Activated T-helper 1 cell treated with anti-CD3 and anti-CD28 coated beads, Interleukin-12 subunit alpha, Interleukin-12 subunit beta, Interleukin-2, Interleukin-4 antibody, amounts not matched to agents 30 ng/mL and 10 ng/mL and 1 ng/mL, durations not matched to agents 14 hours and 24 hours and 36 hours (primary cell): ENCODE measurements at regions of chr22 and their contacts with region 1.

Region 1: DNA sequence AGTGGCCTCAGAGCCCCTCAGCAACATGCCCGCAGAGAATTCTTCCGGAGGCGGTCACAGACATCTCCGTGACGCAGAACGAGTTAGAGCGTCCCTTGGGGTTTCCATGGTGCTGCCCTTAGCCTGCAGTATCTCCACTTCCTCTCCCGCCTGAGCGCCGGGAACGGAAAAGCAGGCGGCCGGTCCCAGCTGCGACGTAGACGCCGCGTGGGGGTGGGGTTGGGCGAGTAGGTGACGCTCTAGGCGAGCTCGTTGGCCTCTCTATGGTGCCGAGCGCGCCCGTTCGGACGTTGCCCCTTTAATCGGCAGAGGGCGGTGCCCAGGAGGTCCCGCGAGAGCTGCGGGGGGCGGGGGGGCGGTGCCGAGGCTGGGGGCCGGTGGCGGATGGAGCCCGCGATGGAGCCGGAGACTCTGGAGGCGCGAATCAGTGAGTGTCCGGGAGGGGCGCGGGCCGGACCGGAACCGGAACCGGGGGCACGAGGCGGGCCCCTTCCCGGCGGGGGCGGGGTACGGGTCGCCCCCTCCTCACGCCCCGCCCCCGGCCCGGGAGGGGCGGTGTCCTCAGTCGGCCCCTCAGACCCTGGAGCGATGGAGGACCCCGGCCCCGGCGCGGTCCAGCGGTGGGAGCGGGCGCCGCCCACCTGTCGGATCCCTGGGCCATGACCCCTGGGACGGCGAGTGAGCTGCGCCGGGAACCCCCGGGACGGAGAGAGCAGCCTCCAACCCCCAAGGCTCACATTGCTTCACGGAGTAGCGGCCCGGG is at the start of gene GGA1:
- DNase-seq: peak; percentile 96
- H3K4me3 Mint-ChIP-seq: peak within 1 kb of the TSS; percentile 96
- H3K27ac Mint-ChIP-seq: peak within 1 kb of the TSS; percentile 98
- H3K4me1 Mint-ChIP-seq: peaks cover 45% of the 10 kb centered on the region
- H3K27me3 Mint-ChIP-seq: peaks cover 1% of the 10 kb centered on the region
- total RNA-seq, gene GGA1: 70.8 and 78.9 TPM in 2 replicates

Region 2: GRCh38 chr22:37486224-37486845 is 122.3 kb before region 1 on chr22 and contains the start of gene MFNG:
- intact Hi-C with region 1: loop called (anchors 1 kb)
- DNase-seq: peak; percentile 69
- H3K4me3 Mint-ChIP-seq: peak within 1 kb of the TSS; percentile 92
- H3K27ac Mint-ChIP-seq: peak within 1 kb of the TSS; percentile 93
- H3K4me1 Mint-ChIP-seq: peaks cover 44% of the 10 kb centered on the region
- H3K27me3 Mint-ChIP-seq: no peaks in the 10 kb centered on the region
- total RNA-seq, gene MFNG: 213 and 214 TPM in 2 replicates

Region 3: DNA sequence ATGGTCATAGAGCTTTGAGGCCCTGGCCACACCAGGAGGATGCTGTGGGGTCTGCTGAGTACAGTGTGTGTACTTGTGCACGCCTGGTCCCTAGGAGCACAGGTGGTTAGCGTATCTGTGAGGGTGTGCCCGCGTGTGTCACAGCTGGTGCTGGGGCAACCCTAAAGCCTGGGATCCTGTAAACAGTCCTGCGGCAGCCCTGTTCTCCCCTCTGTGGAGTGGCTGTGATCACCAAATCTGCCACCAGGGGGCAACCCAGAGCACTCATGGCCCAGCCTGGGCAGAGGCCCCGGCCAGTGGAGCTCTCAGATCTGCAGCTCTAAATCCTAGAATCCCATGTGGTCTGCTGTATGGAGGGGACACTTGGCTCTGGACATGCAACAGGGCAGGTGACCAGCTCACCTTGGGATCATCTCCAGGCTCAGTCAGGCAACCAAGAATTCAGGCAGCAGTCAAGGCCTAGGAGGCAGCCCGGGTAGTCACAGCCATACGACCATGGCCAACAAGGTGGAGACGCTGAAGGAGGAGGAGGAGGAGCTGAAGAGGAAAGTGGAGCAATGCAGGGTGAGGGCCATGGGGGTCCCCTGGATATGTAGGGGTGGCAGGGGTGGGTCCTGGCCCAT is 34.7 kb after region 1 on chr22:
- intact Hi-C with region 1: loop called (anchors 1 kb)
- DNase-seq: peak; percentile 74
- H3K4me3 Mint-ChIP-seq: peak overlapping the region; percentile 59
- H3K27ac Mint-ChIP-seq: peak overlapping the region; percentile 52
- H3K4me1 Mint-ChIP-seq: peaks cover 26% of the 10 kb centered on the region
- H3K27me3 Mint-ChIP-seq: no peaks in the 10 kb centered on the region

Region 4: DNA sequence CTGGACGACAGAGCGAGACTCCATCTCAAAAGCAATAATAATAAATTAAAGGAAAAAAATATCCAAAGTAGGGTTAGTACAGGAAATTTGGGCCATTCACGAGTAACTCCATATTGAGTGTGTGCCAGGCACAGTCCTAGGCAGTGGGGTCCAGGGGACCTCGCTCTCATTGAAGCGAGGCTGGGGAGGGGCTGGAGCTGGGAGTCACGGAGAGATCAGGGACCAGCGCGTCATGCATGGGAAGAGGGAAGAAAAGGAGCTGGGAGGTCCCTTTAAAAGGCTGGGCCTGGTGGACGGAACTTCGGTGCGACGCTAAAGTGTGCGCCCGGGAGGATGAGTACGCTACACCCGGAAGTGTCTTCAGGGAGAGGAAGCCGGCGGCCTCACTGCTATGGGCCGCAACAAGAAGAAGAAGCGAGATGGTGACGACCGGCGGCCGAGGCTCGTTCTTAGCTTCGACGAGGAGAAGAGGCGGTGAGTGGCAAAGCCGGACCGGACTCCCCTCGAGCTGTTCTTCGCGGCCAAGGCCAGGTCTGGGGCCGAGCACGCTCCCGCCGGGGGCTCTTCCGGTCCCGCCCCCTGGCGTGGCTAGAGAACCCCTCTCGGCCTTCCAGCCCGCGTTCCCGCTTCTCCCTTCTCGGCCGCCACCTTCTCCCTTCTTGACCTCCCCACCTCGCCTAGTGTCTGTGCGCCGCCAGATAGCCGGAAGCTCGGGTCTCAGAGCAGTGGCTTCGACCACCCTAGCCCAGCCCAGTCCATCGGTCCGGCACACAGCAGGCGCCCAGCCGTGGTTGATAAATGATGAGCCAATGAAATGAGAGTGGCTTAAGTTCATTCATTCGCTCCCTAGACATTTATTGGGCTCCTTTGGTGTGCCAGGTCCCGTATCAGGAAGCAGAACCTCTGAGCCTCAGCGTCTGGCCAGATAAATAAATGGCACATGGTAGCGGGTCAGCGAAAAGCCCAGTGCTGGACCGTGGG is 77.6 kb after region 1 on chr22 and contains the start of gene NOL12:
- intact Hi-C with region 1: loop called (anchors 1 kb)
- DNase-seq: peak; percentile 74
- H3K4me3 Mint-ChIP-seq: peak within 1 kb of the TSS; percentile 96
- H3K27ac Mint-ChIP-seq: peak within 1 kb of the TSS; percentile 97
- H3K4me1 Mint-ChIP-seq: peaks cover 24% of the 10 kb centered on the region
- H3K27me3 Mint-ChIP-seq: no peaks in the 10 kb centered on the region
- total RNA-seq, gene NOL12: 67.8 and 70.0 TPM in 2 replicates

Region 5: DNA sequence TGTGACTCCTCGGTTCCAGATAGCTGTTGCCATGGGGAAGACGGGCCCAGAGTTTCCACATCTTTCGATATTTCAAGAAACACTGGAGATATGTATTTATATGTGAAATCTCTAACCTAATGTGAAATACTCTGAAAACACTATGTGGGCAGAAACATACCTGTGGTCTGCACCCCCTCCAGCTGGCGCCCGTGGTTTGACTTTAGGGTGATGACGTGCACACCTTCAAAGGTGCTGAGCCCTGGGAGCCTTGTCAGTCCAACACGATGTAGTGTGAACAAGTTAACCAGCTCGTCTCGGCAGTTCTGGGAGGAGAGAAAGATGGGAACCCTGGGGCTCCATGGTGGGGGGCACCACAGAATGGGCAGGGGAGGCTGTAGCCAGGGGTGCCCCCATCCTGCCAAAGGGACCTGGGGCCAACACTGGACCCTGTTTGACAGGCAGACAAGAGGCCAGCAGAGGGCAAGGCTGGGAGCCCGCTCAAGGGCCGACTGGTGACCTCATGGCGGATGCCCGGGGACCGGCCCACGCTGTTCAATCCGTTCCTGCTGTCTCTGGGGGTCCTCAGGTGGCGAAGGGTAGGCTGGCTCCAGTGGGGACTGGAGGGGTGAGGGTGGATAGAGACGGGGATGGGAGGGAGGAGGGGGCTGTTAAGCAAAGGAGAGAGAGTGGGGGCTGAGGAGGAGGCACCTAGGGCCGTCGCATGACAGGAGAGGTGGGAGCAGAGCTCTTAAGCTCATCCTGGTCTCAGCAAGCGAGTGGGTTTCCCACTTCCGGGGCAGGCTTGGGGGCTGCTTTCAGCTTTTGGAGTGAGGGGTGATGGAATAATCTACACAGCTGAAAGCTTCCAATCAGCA is 132.0 kb after region 1 on chr22:
- intact Hi-C with region 1: no loop called
- DNase-seq: no peak
- H3K4me3 Mint-ChIP-seq: no peak overlapping the region
- H3K27ac Mint-ChIP-seq: no peak overlapping the region
- H3K4me1 Mint-ChIP-seq: peaks cover 19% of the 10 kb centered on the region
- H3K27me3 Mint-ChIP-seq: no peaks in the 10 kb centered on the region

Region 6: DNA sequence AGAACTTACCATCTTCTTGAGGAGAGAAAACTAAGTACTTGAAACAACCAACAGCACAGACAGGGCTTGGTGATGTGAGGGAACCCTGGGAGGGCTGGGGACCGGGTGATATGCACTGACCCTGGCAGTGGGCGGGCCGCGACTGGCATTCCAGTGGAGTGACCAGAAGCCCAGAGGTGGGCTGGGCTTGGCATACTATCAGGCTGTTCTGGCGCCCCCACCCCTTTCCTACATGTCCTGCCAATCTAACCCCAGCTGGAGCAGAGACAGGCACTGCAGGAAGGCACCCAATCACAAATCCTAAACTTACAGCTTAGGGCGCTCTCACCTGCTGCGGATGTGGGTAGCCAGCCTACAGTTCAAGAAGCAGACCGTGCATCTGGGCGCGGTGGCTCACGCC is 145.1 kb after region 1 on chr22:
- intact Hi-C with region 1: no loop called
- DNase-seq: no peak
- H3K4me3 Mint-ChIP-seq: no peak overlapping the region
- H3K27ac Mint-ChIP-seq: no peak overlapping the region
- H3K4me1 Mint-ChIP-seq: no peaks in the 10 kb centered on the region
- H3K27me3 Mint-ChIP-seq: no peaks in the 10 kb centered on the region

Region 7: DNA sequence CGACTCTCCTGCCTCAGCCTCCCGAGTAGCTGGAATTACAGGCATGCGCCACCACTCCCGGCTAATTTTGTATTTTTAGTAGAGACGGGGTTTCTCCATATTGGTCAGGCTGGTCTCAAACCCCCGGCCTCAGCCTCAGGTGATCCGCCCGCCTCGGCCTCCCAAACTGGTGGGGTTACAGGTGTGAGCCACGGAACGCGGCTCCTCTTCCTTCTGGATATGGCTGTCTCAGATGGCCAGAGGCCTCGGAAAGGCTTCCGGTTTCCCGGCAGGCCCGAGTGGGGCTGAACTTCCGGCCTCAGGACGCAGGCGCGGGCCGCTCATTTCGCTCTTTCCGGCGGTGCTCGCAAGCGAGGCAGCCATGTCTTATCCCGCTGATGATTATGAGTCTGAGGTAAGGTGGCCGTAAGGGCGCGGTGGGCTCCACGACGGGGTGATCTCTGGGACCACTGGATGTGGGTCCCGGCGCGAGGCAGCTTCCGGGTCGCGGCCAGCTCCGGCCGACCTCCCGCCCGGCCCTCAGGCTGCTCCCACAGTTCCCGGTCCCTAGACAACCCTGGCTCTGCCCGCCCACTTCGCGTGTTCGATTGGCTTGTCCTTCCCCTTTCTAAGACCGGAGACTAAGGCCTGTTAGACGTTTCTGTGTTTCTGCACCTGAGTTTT is 240.6 kb after region 1 on chr22 and contains the start of gene EIF3L:
- intact Hi-C with region 1: loop called (anchors 1 kb)
- DNase-seq: peak; percentile 89
- H3K4me3 Mint-ChIP-seq: peak within 1 kb of the TSS; percentile 97
- H3K27ac Mint-ChIP-seq: peak within 1 kb of the TSS; percentile 96
- H3K4me1 Mint-ChIP-seq: peaks cover 49% of the 10 kb centered on the region
- H3K27me3 Mint-ChIP-seq: no peaks in the 10 kb centered on the region
- total RNA-seq, gene EIF3L: 433 and 441 TPM in 2 replicates